ENCODE measurements at regions of chr10 and their contacts with region 1.

Region 1: DNA sequence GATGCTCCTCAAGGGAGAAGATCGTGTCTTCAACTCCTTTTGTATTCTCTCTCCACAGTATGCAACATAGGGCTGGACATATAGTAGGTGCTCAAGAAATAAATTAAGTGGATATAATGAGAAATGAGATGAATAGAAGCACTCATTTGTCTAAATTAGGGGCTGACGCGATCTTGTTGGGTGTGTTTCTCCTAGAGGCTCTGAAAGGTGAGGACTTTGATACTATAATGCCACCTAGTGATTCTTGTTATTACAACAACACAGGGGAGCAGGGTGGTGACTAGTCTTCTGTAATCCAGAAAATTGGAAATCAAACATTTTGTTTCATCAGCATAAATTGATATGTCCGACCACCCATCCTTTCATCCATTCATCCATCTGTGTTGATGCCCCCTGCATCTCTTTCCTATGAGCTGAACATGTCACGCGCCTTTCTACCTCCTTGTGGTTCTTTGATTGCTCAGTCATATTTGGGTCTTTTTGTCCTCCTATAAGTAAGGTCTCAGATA is 3.5 kb upstream of the CFAP58 start:
- DNase-seq: peak; percentile 82
- H3K4me3 ChIP-seq: no peak overlapping the region
- H3K27ac ChIP-seq: no peak overlapping the region
- H3K4me1 ChIP-seq: peaks cover 8% of the 10 kb centered on the region
- H3K27me3 ChIP-seq: no peaks in the 10 kb centered on the region
- CTCF ChIP-seq: peak; percentile 69

Region 2: DNA sequence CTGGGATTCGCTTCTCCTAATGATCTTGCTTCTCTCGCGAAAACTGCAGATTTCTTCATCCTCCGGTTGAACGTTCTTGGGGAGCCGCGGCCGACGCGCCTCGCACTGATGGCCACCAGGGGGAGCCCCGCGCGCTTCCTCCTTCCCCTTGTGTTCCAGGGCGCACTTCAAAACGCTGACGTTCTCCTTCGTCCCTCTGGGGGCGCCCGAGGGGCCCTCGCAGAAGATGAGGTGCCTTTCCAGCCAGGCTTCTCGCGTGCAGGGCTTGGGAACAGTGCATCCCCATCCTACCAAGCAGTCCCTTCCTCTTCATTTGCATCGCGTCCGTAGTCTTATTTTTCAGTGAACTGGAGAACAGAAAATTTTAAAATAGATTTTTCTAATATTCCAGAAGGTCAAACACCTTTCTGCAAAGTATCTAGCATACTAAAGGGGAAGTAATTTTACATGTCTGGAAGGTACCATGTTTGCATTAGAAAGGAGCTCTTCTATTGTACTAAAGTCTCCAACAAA is 58.7 kb before region 1 on chr10:
- CTCF ChIA-PET with region 1: interaction called, 7 read pairs
- POLR2A ChIA-PET with region 1: no interaction called
- intact Hi-C with region 1: loop called (anchors 1 kb)
- DNase-seq: peak; percentile 92
- H3K4me3 ChIP-seq: no peak overlapping the region
- H3K27ac ChIP-seq: no peak overlapping the region
- H3K4me1 ChIP-seq: no peaks in the 10 kb centered on the region
- H3K27me3 ChIP-seq: peaks cover 43% of the 10 kb centered on the region
- CTCF ChIP-seq: peak; percentile 100

Region 3: DNA sequence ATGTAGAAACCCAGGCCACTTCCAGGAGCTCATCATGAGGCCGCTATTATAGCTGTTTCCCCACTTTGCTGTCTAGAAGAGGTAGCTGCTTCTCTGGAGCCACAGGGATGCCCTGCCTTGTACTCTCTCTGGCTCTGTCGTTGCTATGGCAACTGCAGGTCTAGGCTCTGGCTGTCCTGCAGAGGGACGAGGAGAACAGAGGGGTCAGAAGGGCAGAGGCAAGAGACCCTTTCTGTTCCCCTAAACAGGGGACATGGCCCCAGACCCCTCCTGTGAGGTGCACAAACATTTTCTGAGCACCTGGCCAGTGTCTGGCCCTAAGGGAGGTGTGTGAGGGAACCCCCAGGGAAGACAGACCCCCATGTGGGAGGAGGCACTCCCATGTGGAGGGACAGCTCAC is 43.3 kb before region 1 on chr10:
- CTCF ChIA-PET with region 1: interaction called, 18 read pairs
- POLR2A ChIA-PET with region 1: no interaction called
- intact Hi-C with region 1: loop called (anchors 1 kb)
- DNase-seq: no peak
- H3K4me3 ChIP-seq: no peak overlapping the region
- H3K27ac ChIP-seq: no peak overlapping the region
- H3K4me1 ChIP-seq: no peaks in the 10 kb centered on the region
- H3K27me3 ChIP-seq: no peaks in the 10 kb centered on the region
- CTCF ChIP-seq: no peak

Region 4: DNA sequence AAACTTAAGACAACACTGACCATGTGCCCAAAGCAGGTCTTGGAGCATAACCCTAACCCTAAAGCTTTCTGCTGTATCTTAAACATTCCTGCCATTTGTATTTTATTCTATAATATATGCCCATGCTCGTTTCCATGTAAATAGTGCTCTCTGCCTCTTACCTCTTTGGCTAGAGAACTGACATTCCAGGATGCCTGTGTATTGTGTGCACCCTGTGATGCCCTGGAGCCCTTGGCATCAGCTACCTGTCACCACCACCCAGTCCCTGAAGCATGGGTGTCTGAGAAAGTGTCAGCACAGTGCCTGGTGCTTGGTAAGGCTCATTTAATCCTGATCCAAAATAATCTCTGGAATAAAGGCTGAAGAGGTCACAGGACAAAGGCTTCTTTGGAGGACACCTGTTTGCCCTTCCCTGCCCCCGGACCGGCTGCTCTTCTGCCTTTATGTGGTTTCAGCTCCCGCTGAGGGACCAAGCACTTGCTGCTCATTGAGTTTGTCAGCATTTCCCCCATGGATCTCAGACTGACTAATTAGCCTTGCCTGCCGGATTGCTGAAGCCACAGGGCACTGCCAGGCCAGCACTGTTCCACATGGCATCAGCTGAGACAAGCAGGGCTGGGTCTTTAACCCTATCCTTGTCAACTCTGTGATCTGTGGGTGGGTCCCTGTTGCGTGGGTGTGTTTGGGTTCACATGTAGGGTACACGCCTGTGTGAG is 151.8 kb after region 1 on chr10:
- CTCF ChIA-PET with region 1: no interaction called
- POLR2A ChIA-PET with region 1: no interaction called
- intact Hi-C with region 1: no loop called
- DNase-seq: no peak
- H3K4me3 ChIP-seq: no peak overlapping the region
- H3K27ac ChIP-seq: no peak overlapping the region
- H3K4me1 ChIP-seq: no peaks in the 10 kb centered on the region
- H3K27me3 ChIP-seq: peaks cover 34% of the 10 kb centered on the region
- CTCF ChIP-seq: no peak

Region 5: DNA sequence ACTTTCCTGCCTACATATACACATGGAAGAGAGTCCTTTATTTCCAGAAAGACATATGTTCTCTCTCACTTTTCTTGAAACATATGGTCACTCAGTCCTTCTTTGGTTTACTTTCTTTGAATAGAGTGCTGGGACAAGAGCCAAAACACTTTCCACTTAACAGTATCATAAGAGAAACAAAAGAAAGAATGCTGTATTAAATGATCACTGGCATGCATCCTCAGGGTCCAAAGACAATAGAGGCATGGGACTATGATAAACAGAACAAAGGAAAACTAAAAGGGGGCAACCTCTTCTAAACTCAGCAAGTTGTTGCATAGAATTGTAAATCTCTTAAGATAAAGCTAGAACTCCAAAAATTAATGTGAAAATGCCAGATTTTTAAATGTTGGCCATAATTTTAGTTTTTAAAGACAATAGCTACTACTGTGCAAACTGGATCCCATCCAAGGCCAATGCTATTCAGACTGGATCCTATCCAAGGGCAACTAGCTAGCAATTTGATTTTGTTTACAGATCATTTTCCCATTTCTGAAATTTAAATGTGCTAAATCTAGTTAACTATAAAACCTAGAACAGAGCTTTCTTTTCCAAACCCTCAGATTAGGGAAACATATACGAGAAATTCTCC is 978.4 kb after region 1 on chr10:
- CTCF ChIA-PET with region 1: no interaction called
- POLR2A ChIA-PET with region 1: no interaction called
- intact Hi-C with region 1: no loop called
- DNase-seq: no peak
- H3K4me3 ChIP-seq: no peak overlapping the region
- H3K27ac ChIP-seq: no peak overlapping the region
- H3K4me1 ChIP-seq: no peaks in the 10 kb centered on the region
- H3K27me3 ChIP-seq: peaks cover 46% of the 10 kb centered on the region
- CTCF ChIP-seq: no peak